Activated T-helper 2 cell treated with anti-CD3 and anti-CD28 coated beads, Interferon-gamma antibody, Interleukin-2, Interleukin-4, amounts not matched to agents 10 μg/mL and 5 μg/mL and 100 μg/mL, durations not matched to agents 14 hours and 24 hours and 36 hours (primary cell): ENCODE measurements at regions of chr5 and their contacts with region 1.

Region 1: GRCh38 chr5:77143998-77144836 is 57.1 kb upstream of the ZBED3 start:
- DNase-seq: peak; percentile 45
- H3K4me3 Mint-ChIP-seq: no peak overlapping the region
- H3K27ac Mint-ChIP-seq: no peak overlapping the region
- H3K4me1 Mint-ChIP-seq: peaks cover 18% of the 10 kb centered on the region
- H3K27me3 Mint-ChIP-seq: peaks cover 20% of the 10 kb centered on the region

Region 2: DNA sequence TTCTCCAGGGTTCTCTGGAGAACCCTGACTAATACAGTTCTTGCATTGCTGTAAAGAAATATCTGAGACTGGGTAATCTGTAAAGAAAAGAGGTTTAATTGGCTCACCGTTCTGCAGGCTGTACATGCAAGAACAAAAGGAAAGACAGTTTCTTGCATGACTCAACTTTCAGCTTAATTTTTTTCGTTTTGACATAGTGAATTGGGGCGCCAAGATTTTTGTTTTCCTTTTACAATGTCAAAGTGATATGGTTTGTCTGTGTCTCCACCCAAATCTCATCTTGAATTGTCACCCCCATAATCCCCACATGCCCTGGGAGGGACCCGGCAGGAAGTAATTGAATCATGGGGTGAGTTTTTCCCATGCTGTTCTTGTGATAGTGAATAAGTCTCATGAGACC is 203.2 kb before region 1 on chr5:
- intact Hi-C with region 1: no loop called
- DNase-seq: no peak
- H3K4me3 Mint-ChIP-seq: no peak overlapping the region
- H3K27ac Mint-ChIP-seq: no peak overlapping the region
- H3K4me1 Mint-ChIP-seq: peaks cover 4% of the 10 kb centered on the region
- H3K27me3 Mint-ChIP-seq: peaks cover 22% of the 10 kb centered on the region

Region 3: DNA sequence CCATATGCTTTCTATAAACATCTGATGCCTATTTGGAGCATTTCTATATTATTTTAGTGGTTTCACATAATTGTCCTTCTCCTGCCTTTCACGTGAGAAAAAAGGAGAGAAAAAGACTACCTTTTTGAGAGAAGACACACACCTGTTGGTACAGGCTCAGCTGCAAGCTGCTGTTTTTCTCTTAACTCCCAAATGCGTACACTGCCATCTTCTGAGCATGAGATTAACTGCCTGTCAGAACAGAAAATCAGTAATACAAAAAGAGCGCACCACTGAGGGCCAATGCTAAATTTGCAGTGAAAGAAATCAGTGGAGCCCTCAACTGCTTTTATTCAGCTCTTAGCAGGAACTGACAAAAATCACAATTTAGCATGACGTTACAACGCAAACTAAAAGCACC is 293.0 kb after region 1 on chr5:
- intact Hi-C with region 1: loop called (anchors 10 kb)
- DNase-seq: no peak
- H3K4me3 Mint-ChIP-seq: no peak overlapping the region
- H3K27ac Mint-ChIP-seq: no peak overlapping the region
- H3K4me1 Mint-ChIP-seq: peaks cover 2% of the 10 kb centered on the region
- H3K27me3 Mint-ChIP-seq: no peaks in the 10 kb centered on the region

Region 4: GRCh38 chr5:77630258-77631089 is 486.3 kb after region 1 on chr5:
- intact Hi-C with region 1: loop called (anchors 2 kb)
- DNase-seq: peak; percentile 49
- H3K4me3 Mint-ChIP-seq: peak overlapping the region; percentile 75
- H3K27ac Mint-ChIP-seq: no peak overlapping the region
- H3K4me1 Mint-ChIP-seq: peaks cover 12% of the 10 kb centered on the region
- H3K27me3 Mint-ChIP-seq: peaks cover 72% of the 10 kb centered on the region